ENCODE measurements at regions of chr7 and their contacts with region 1.

Region 1: GRCh38 chr7:39465055-39465929 is 100.9 kb upstream of the YAE1 start:
- DNase-seq: peak; percentile 68
- ATAC-seq: peak; percentile 90
- H3K4me3 Mint-ChIP-seq: no peak overlapping the region
- H3K27ac Mint-ChIP-seq: no peak overlapping the region
- H3K4me1 Mint-ChIP-seq: peaks cover 7% of the 10 kb centered on the region
- H3K27me3 Mint-ChIP-seq: peaks cover 3% of the 10 kb centered on the region
- CTCF ChIP-seq: peak; percentile 86

Region 2: GRCh38 chr7:38775506-38776175 is 689.7 kb before region 1 on chr7:
- CTCF ChIA-PET with region 1: no interaction called
- POLR2A ChIA-PET with region 1: no interaction called
- intact Hi-C with region 1: no loop called
- DNase-seq: no peak
- ATAC-seq: no peak
- H3K4me3 Mint-ChIP-seq: no peak overlapping the region
- H3K27ac Mint-ChIP-seq: no peak overlapping the region
- H3K4me1 Mint-ChIP-seq: no peaks in the 10 kb centered on the region
- H3K27me3 Mint-ChIP-seq: no peaks in the 10 kb centered on the region
- CTCF ChIP-seq: no peak

Region 3: GRCh38 chr7:38796626-38797501 is 668.4 kb before region 1 on chr7:
- CTCF ChIA-PET with region 1: interaction called, 3 read pairs
- POLR2A ChIA-PET with region 1: interaction called, 3 read pairs
- intact Hi-C with region 1: loop called (anchors 5 kb)
- DNase-seq: peak; percentile 60
- ATAC-seq: no peak
- H3K4me3 Mint-ChIP-seq: no peak overlapping the region
- H3K27ac Mint-ChIP-seq: no peak overlapping the region
- H3K4me1 Mint-ChIP-seq: no peaks in the 10 kb centered on the region
- H3K27me3 Mint-ChIP-seq: no peaks in the 10 kb centered on the region
- CTCF ChIP-seq: peak; percentile 86

Region 4: DNA sequence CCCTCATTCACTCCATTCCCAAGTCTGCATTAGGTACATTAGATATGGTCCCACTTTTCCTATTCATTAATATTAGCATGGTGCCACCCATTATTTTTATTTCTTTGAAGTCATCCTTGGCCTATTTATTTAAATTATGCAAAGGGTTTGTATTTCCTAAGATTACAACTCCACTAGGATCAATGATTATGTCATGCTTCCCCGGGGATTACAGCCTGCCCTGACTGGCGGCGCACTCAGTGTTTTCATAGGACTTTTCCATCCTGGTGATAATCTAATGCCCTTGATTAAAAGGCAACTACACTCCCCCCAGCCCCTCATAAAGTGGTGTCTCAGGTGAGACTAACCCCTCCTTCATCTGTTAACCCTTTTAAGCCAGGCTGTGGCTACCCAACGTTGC is 300.4 kb before region 1 on chr7:
- CTCF ChIA-PET with region 1: no interaction called
- POLR2A ChIA-PET with region 1: no interaction called
- intact Hi-C with region 1: no loop called
- DNase-seq: no peak
- ATAC-seq: no peak
- H3K4me3 Mint-ChIP-seq: no peak overlapping the region
- H3K27ac Mint-ChIP-seq: no peak overlapping the region
- H3K4me1 Mint-ChIP-seq: no peaks in the 10 kb centered on the region
- H3K27me3 Mint-ChIP-seq: no peaks in the 10 kb centered on the region
- CTCF ChIP-seq: no peak